ENCODE measurements at regions of chrX and their contacts with region 1.

Region 1: DNA sequence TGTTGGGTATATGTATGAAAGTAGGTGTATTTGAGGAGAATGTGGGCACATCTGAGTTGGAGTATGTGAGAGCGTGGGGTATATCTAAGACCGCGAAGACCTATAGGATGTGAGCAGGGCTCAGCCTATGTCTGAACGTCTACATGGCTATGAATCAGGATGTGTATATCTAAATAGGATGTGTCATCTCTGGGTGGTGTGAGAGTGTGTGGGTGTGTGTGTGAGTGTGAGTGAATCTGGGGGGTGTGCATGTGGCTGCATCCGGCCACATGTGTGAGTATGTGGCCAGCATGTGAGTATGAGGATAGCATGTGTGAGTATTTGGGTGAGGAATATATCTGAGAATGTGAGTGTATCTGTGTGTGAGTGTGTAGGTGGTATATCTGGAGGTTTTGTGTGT is 7.7 kb downstream of the GPR173 start:
- DNase-seq: no peak
- ATAC-seq: no peak

Region 2: GRCh38 chrX:53095796-53096195 is 39.5 kb after region 1 on chrX:
- intact Hi-C with region 1: loop called (anchors 2 kb)
- DNase-seq: no peak
- ATAC-seq: no peak

Region 3: DNA sequence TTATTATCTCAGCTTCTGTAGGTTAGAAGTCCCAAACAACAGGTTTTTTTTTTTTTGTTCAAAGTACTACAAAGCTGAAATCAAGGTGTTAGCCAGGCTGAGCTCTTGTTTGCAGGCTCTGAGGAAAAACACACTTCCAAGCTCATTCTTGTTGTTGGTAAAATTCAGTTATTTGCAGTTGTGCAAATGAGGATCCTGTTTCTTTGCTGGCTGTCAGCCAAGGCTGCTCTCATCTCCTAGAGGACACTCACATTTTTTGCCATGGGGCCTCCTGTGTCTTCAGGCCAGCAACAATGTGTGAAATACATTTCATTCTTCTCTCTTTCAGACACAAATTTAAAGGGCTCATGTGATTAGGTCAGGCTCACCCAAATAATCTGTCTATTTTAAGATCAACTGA is 438.1 kb after region 1 on chrX:
- intact Hi-C with region 1: no loop called
- DNase-seq: no peak
- ATAC-seq: no peak

Measured in sciatic nerve (tissue), 2 donors.